CD14-positive monocyte (primary cell): ENCODE measurements at regions of chr1 and their contacts with region 1.

Region 1: GRCh38 chr1:199684686-199685273 is 342.7 kb upstream of the NR5A2 start:
- DNase-seq: peak; percentile 42 to 72 (median 56)
- H3K4me3 ChIP-seq: no peak overlapping the region
- H3K4me3 Mint-ChIP-seq: no peak overlapping the region
- H3K27ac ChIP-seq: no peak overlapping the region
- H3K27ac Mint-ChIP-seq: no peak overlapping the region
- H3K4me1 ChIP-seq: peaks cover 0 to 6% of the 10 kb centered on the region in 2 donors
- H3K4me1 Mint-ChIP-seq: peaks cover 14% of the 10 kb centered on the region
- H3K27me3 ChIP-seq: no peaks in the 10 kb centered on the region
- H3K27me3 Mint-ChIP-seq: peaks cover 0 to 1% (median 0%) of the 10 kb centered on the region in 3 donors
- CTCF ChIP-seq: peak; percentile 92

Region 2: DNA sequence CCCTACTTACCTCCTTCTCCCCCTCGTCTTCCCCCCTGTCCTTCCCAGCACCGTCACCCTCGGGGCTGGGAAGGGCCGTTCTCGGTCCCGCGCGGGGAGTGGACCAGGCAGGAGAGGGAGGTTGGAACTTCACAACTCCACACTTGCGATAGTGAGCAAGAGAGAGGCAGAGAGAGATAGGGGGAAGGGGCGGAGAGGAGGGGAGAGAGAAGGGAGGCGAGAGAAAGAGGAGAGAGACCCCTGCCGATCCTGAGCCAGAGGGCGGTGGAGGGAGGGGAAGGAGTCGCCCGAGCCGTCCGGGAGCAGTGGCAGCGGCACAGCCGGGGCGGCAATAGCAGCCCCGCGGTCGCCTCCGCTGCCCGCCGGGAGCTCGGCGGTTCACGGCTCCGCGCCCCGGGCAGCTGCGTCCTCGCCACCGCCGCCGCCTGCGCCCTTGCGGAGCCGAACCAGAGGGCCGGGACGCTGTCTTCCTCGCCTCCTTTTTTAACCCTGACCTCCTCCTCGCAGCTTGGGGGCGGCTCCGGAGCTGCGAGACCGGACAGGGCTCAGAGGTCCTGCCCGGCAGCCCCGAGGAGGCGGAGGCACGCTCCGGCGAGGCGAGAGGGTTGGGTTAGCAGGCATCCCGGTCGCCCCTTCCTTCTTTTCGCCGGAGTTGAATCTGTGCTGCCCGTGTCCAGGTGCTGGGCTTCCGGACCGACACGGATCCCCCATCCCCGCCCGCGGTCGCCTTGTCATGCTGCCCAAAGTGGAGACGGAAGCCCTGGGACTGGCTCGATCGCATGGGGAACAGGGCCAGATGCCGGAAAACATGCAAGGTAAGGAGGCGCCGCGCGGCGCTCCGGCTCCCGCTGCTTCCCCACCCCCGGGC is 354.4 kb after region 1 on chr1:
- intact Hi-C with region 1: loop called in 1 of 2 experiments (anchors 10 kb)
- DNase-seq: peak; percentile 40 to 55 (median 40)
- H3K4me3 ChIP-seq: peak overlapping the region; percentile 33 to 84 (median 60)
- H3K4me3 Mint-ChIP-seq: peak overlapping the region; percentile 89 to 99
- H3K27ac ChIP-seq: no peak overlapping the region
- H3K27ac Mint-ChIP-seq: peak overlapping the region in 1 of 7 donors; percentile 41
- H3K4me1 ChIP-seq: peaks cover 46 to 66% of the 10 kb centered on the region in 2 donors
- H3K4me1 Mint-ChIP-seq: peaks cover 45% of the 10 kb centered on the region
- H3K27me3 ChIP-seq: peaks cover 92 to 99% of the 10 kb centered on the region in 2 donors
- H3K27me3 Mint-ChIP-seq: peaks cover 0 to 47% (median 44%) of the 10 kb centered on the region in 3 donors
- CTCF ChIP-seq: no peak